GM12878 (cell line): ENCODE measurements at regions of chr18 and their contacts with region 1.

Region 1: GRCh38 chr18:31399306-31400032 is 22.9 kb downstream of the DSG4 start:
- DNase-seq: no peak
- ATAC-seq: no peak
- H3K4me3 ChIP-seq: no peak overlapping the region
- H3K27ac ChIP-seq: no peak overlapping the region
- H3K4me1 ChIP-seq: no peaks in the 10 kb centered on the region
- H3K27me3 ChIP-seq: no peaks in the 10 kb centered on the region
- CTCF ChIP-seq: no peak
- EP300 ChIP-seq: no peak
- POLR2A ChIP-seq: no peak
- RAD21 ChIP-seq: no peak

Region 2: GRCh38 chr18:30971338-30971956 is 428.0 kb before region 1 on chr18:
- CTCF ChIA-PET with region 1: no interaction called
- POLR2A ChIA-PET with region 1: no interaction called
- RAD21 ChIA-PET with region 1: no interaction called
- SMC1A ChIA-PET with region 1: no interaction called
- in situ Hi-C with region 1: no loop called
- intact Hi-C with region 1: loop called (anchors 10 kb)
- DNase-seq: no peak
- ATAC-seq: peak; percentile 80
- H3K4me3 ChIP-seq: no peak overlapping the region
- H3K27ac ChIP-seq: no peak overlapping the region
- H3K4me1 ChIP-seq: no peaks in the 10 kb centered on the region
- H3K27me3 ChIP-seq: no peaks in the 10 kb centered on the region; a peak in 1 of 4 replicates
- CTCF ChIP-seq: peak; percentile 21 to 49 (median 41); a peak in 4 of 6 replicates
- EP300 ChIP-seq: no peak
- POLR2A ChIP-seq: no peak
- RAD21 ChIP-seq: peak; percentile 34; the same call in 1 of the 2 replicates

Region 3: DNA sequence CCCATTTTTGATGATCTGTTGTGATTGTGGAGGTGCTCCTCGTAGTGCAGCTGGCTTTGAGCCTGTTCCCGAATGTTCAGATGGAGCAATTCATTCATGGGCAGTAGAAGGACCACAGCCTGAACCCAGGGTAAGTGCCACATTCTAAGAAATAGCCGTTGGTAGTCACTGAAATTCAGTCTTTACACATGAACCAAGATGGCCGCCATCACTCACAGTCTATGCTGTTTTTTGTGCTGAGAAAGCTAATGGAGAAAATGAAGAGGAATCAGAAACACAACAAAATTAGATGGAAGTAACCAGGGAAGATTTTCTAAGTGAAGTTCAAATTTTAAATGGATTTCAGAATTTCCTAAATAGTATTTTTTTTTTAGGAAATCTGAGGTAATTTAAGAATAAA is 56.0 kb before region 1 on chr18:
- CTCF ChIA-PET with region 1: no interaction called
- POLR2A ChIA-PET with region 1: no interaction called
- RAD21 ChIA-PET with region 1: no interaction called
- SMC1A ChIA-PET with region 1: no interaction called
- in situ Hi-C with region 1: loop called (anchors 10 kb)
- intact Hi-C with region 1: loop called (anchors 10 kb)
- DNase-seq: no peak
- ATAC-seq: no peak
- H3K4me3 ChIP-seq: no peak overlapping the region
- H3K27ac ChIP-seq: no peak overlapping the region
- H3K4me1 ChIP-seq: no peaks in the 10 kb centered on the region
- H3K27me3 ChIP-seq: no peaks in the 10 kb centered on the region
- CTCF ChIP-seq: no peak
- EP300 ChIP-seq: no peak
- POLR2A ChIP-seq: no peak
- RAD21 ChIP-seq: no peak

Region 4: GRCh38 chr18:31356025-31356424 is 43.4 kb before region 1 on chr18:
- CTCF ChIA-PET with region 1: no interaction called
- POLR2A ChIA-PET with region 1: no interaction called
- RAD21 ChIA-PET with region 1: no interaction called
- SMC1A ChIA-PET with region 1: no interaction called
- in situ Hi-C with region 1: no loop called
- intact Hi-C with region 1: no loop called
- DNase-seq: peak; percentile 20
- ATAC-seq: peak; percentile 74
- H3K4me3 ChIP-seq: no peak overlapping the region
- H3K27ac ChIP-seq: no peak overlapping the region
- H3K4me1 ChIP-seq: no peaks in the 10 kb centered on the region
- H3K27me3 ChIP-seq: no peaks in the 10 kb centered on the region; a peak in 2 of 4 replicates
- CTCF ChIP-seq: no peak
- EP300 ChIP-seq: no peak
- POLR2A ChIP-seq: no peak
- RAD21 ChIP-seq: no peak

Region 5: GRCh38 chr18:31430554-31430953 is 31.1 kb after region 1 on chr18:
- CTCF ChIA-PET with region 1: no interaction called
- POLR2A ChIA-PET with region 1: no interaction called
- RAD21 ChIA-PET with region 1: no interaction called
- SMC1A ChIA-PET with region 1: no interaction called
- in situ Hi-C with region 1: no loop called
- intact Hi-C with region 1: no loop called
- DNase-seq: no peak
- ATAC-seq: peak; percentile 49
- H3K4me3 ChIP-seq: no peak overlapping the region
- H3K27ac ChIP-seq: no peak overlapping the region
- H3K4me1 ChIP-seq: no peaks in the 10 kb centered on the region
- H3K27me3 ChIP-seq: no peaks in the 10 kb centered on the region
- CTCF ChIP-seq: no peak
- EP300 ChIP-seq: no peak
- POLR2A ChIP-seq: no peak
- RAD21 ChIP-seq: no peak

Region 6: DNA sequence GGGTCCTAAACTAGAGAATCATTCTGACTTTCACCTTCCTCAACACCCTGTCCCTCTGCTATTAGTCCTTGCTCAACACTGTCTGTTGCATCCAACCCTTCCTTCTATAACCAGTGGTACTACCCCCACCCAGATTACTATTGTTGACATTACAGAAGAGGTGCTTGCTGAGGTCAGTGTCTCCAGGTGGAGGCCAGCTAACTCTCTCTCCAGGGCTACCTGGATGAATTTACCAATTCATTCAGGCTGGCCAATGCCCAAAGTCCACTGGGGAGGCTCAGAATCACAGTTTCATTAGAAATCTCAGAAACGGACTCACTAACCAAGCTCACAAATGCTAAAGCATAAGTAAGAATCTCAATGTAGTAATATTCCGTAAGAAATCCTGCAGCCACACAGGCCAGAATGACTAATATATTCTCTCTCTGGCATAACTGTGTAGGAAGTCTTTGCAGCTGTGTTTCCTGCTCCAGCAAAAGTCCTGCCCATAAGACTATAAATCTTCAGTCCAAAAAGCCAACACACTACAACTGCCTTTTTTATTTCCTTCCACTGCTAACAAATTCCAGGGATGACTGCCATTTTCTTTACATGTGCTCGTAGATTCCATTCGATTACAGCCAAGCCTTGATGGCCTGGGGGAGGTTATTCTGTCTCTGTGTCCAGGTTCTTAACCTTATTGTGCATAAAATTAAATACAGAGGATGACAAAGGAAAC is 182.2 kb after region 1 on chr18:
- CTCF ChIA-PET with region 1: no interaction called
- POLR2A ChIA-PET with region 1: no interaction called
- RAD21 ChIA-PET with region 1: no interaction called
- SMC1A ChIA-PET with region 1: no interaction called
- in situ Hi-C with region 1: no loop called
- intact Hi-C with region 1: no loop called
- DNase-seq: no peak
- ATAC-seq: no peak
- H3K4me3 ChIP-seq: no peak overlapping the region
- H3K27ac ChIP-seq: no peak overlapping the region
- H3K4me1 ChIP-seq: peaks cover 4% of the 10 kb centered on the region
- H3K27me3 ChIP-seq: no peaks in the 10 kb centered on the region
- CTCF ChIP-seq: no peak
- EP300 ChIP-seq: no peak
- POLR2A ChIP-seq: no peak
- RAD21 ChIP-seq: no peak